ENCODE measurements at regions of chr19 and their contacts with region 1.

Region 1: GRCh38 chr19:42158926-42159325 is 26.7 kb upstream of the POU2F2 start:
- DNase-seq: no peak
- H3K4me3 ChIP-seq: no peak overlapping the region
- H3K27ac ChIP-seq: no peak overlapping the region
- H3K4me1 ChIP-seq: no peaks in the 10 kb centered on the region
- H3K27me3 ChIP-seq: no peaks in the 10 kb centered on the region
- CTCF ChIP-seq: no peak

Region 2: DNA sequence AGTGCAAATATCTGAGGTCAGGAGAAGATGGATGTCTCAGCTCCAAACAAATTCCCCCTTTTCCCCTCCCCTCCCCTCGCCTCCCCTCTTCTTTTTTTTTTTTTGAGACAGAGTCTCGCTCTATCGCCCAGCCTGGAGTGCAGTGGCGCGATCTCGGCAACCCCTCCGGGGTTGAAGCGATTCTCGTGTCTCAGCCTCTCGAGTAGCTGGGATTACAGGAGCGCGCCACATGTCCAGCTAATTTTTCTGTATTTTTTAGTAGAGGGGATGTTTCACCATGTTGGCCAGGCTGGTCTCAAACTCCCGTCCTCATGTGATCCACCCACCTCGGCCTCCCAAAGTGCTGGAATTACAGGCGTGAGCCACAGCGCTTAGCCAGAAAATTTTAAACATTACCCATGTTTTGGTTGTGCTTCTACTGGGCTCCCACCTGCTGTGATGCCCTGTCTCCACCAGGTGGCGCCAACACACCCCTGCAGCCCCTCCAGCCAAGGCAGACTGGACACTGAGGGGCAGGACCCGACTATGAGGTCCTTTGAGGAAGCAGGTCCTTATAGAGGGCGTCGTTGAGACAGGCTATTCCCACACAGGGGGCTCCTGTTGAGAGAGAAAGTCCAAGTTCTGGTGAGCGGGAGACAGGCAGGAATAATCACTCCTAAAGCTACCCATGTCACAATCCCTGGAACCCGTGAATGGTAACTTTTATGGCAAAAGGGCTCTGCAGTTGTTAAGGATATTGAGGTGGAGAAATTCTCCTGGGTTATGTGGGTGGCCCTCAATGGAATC is 709.7 kb before region 1 on chr19:
- CTCF ChIA-PET with region 1: no interaction called
- dilution Hi-C with region 1: no loop called
- in situ Hi-C with region 1: no loop called
- intact Hi-C with region 1: no loop called
- DNase-seq: peak; percentile 52
- H3K4me3 ChIP-seq: peak overlapping the region in 2 of 3 experiments; percentile 16 to 25
- H3K27ac ChIP-seq: no peak overlapping the region
- H3K4me1 ChIP-seq: no peaks in the 10 kb centered on the region
- H3K27me3 ChIP-seq: no peaks in the 10 kb centered on the region
- CTCF ChIP-seq: peak; percentile 95 to 99

Region 3: GRCh38 chr19:42207767-42208271 is 48.9 kb after region 1 on chr19:
- CTCF ChIA-PET with region 1: interaction called, 18 read pairs
- dilution Hi-C with region 1: no loop called
- in situ Hi-C with region 1: no loop called
- intact Hi-C with region 1: no loop called
- DNase-seq: peak; percentile 76
- H3K4me3 ChIP-seq: no peak overlapping the region
- H3K27ac ChIP-seq: peak overlapping the region; percentile 38
- H3K4me1 ChIP-seq: peaks cover 32% of the 10 kb centered on the region
- H3K27me3 ChIP-seq: no peaks in the 10 kb centered on the region
- CTCF ChIP-seq: no peak